IMR-90 (cell line): ENCODE measurements at regions of chr7 and their contacts with region 1.

Region 1: GRCh38 chr7:105399043-105399725 is 10.5 kb upstream of the SRPK2 start:
- DNase-seq: peak; percentile 52
- ATAC-seq: peak; percentile 80
- H3K4me3 ChIP-seq: no peak overlapping the region
- H3K27ac ChIP-seq: no peak overlapping the region
- H3K4me1 ChIP-seq: peaks cover 5% of the 10 kb centered on the region
- H3K27me3 ChIP-seq: no peaks in the 10 kb centered on the region
- CTCF ChIP-seq: peak; percentile 52
- POLR2A ChIP-seq: no peak
- RAD21 ChIP-seq: peak; percentile 44

Region 2: DNA sequence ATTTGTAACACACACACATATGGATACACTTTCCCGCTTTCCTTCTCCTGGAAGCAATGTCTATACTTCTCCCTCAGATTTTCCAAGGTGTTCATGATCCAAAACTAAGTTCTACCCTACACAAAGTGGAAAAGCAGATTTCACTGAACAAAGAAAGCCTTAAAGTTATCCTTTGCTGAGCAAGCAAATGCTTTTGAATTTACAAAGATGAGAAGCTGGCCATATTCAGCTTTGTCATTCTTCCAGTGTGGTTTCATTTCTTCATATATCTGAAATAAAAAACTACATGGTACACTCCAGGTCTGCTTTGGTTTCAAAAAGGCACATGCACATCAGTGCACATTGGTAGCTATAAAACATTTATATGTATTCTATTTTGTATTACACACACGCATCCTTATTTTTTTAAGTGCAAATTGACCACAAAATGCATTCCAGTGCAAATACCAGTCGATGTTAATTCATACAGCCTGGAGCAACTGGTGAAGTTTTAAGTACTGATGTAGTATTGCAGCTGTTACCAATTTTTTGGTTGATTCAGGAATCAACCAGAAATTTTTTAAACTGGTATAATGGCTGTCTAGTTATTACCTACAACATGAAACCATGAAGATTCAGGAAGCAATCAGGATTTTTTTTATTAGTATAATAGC is 55.0 kb after region 1 on chr7:
- CTCF ChIA-PET with region 1: no interaction called
- POLR2A ChIA-PET with region 1: interaction called, 13 read pairs
- dilution Hi-C with region 1: no loop called
- in situ Hi-C with region 1: no loop called
- intact Hi-C with region 1: no loop called
- DNase-seq: peak; percentile 86
- ATAC-seq: peak; percentile 90
- H3K4me3 ChIP-seq: no peak overlapping the region
- H3K27ac ChIP-seq: no peak overlapping the region
- H3K4me1 ChIP-seq: 0 out of 2 replicates have a peak, but pooled peaks cover 2% of the 10 kb centered on the region
- H3K27me3 ChIP-seq: no peaks in the 10 kb centered on the region
- CTCF ChIP-seq: no peak
- POLR2A ChIP-seq: no peak
- RAD21 ChIP-seq: no peak

Region 3: DNA sequence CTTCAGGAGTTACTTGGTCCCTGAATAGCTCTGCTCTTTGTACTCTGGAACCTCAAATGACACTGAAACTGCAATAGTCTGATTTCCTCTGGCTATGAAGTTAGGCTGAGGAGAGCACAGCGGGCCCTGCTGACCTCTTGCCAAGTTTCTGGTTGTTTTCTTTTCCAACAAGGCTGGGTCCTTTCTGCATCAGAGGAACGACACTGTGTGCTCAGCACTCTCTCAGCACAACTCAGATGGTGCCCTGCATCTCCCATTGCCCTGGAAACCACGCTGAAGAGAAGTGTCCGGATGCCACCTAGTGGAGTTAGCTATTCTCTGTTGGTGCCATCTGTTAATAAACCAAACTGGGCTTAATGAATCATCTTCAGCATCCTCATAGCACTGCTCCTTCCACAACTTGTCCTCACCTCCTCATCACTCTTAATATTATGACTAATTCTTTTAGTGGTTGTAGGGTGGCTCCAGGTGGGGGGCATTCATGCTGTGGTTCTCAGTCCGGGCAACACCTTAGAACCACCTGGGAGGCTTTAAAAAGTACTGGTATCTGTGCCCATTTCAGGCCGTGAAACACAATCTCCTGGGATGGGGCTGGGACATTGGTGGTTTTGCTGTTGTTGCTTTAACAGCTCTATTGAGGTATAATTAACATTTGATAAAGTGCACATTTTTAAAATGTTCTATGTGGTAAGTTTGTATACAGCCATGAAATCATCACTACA is 190.3 kb after region 1 on chr7:
- CTCF ChIA-PET with region 1: no interaction called
- POLR2A ChIA-PET with region 1: no interaction called
- dilution Hi-C with region 1: no loop called
- in situ Hi-C with region 1: no loop called
- intact Hi-C with region 1: loop called (anchors 5 kb)
- DNase-seq: peak; percentile 81
- ATAC-seq: peak; percentile 99
- H3K4me3 ChIP-seq: no peak overlapping the region
- H3K27ac ChIP-seq: no peak overlapping the region
- H3K4me1 ChIP-seq: no peaks in the 10 kb centered on the region
- H3K27me3 ChIP-seq: 0 out of 2 replicates have a peak, but pooled peaks cover under 1% of the 10 kb centered on the region
- CTCF ChIP-seq: peak; percentile 85
- POLR2A ChIP-seq: no peak
- RAD21 ChIP-seq: peak; percentile 81

Region 4: DNA sequence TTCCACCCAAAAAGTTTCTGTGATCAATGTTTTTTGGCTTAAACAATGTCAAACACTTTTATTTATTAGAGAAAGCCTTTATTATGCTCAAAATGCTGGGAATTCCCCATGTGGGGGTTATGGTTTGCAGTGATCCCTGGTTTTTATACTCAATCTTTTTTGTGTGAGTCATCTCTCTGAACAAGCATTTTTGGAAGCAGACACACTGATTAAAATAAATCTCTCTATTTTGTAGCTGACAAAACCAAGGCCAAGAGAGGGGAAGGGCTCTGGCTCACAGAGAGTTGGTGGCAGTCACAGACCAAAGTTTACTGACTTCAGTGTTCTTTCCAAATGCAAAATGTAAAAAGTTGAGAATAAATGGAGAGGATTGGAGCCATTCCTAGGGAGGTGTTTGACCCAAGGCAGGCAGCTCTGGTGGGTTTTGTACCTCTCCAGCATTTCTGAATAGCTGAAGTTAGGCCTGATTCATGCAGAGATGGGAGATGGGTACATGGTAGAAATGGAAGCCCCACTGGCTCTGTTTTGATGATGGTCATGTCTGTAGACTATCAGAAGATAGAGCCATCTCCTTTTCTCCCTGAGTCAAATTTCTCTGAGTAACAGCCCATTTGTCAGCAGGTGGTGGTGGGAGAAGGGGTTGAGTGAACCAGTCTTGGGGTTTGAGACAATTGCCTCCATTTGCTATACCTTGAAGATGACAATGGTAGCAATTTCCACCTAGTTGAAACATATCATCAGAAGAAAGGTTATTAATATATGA is 931.0 kb after region 1 on chr7:
- CTCF ChIA-PET with region 1: no interaction called
- POLR2A ChIA-PET with region 1: no interaction called
- dilution Hi-C with region 1: no loop called
- in situ Hi-C with region 1: no loop called
- intact Hi-C with region 1: no loop called
- DNase-seq: peak; percentile 79
- ATAC-seq: peak; percentile 89
- H3K4me3 ChIP-seq: no peak overlapping the region
- H3K27ac ChIP-seq: no peak overlapping the region
- H3K4me1 ChIP-seq: peaks cover 13% of the 10 kb centered on the region
- H3K27me3 ChIP-seq: no peaks in the 10 kb centered on the region
- CTCF ChIP-seq: no peak
- POLR2A ChIP-seq: no peak
- RAD21 ChIP-seq: no peak